Left cardiac atrium (tissue), 4 donors: ENCODE measurements at regions of chr3 and their contacts with region 1.

Region 1: DNA sequence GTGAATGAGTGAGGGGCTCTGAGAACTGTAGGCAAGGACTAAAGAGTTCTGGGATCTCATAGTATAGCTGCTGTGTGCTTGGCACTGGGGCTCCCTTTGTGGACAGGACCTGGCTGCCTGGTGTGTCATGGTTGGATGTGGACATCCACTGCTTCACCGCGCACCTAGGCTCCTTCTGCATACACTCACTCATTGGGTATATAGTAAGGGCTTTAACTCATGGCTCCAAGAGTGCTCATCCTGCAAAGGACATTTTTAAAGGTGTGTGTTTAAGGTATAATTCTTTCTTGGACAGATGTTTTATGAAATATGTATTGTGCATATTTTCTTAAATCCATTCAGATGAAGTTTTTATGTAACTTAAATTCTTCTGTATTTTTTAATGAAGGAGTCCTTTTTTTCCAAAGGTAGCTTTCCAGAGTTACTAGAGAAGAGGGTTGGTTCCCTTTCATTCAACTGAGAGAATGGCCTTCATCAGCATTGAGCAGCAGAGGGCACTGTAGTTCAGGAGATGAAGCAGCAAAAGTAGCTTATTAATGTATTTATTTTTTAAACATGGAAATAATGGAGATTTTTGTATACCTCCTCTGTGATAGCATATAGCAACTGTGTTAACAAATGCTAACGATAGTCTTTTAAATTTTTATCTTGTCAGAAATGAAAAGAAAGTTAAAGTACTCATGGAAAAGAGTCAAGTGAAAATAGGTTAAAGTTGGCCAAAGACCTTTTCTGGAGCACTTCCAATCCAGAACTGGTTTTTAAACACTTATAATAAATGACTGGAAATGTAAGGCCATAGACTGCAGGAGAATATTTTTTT is 25.2 kb downstream of the OXNAD1 start:
- DNase-seq: peak; percentile 37
- ATAC-seq: peak; percentile 40 to 42

Region 2: GRCh38 chr3:16511681-16512434 is 221.6 kb after region 1 on chr3:
- intact Hi-C with region 1: loop called (anchors 10 kb)
- DNase-seq: peak; percentile 78
- ATAC-seq: peak; percentile 49 to 62

Region 3: GRCh38 chr3:16550676-16551341 is 260.6 kb after region 1 on chr3:
- intact Hi-C with region 1: loop called (anchors 1 to 10 kb)
- DNase-seq: peak; percentile 58
- ATAC-seq: peak; percentile 79 to 86